ENCODE measurements at regions of chrX and their contacts with region 1.

Region 1: DNA sequence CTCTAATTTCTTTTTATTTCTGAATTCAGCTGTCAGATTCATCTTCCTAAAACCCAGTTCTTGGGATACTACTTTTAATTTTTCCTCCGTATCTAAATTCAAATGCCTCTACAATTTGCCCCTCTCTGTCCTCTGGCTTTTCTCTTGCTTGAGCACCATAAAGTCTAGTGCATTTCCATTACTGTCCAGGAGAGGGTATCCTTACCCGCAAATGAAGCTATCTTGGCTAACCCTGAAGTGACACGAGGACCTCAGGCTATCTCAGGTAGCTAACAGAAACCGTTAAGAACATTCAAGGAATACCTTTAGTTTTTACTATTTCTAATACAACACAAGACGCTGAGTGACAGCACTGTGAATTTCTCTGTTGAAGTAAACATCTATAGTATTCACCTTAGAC is 49.3 kb upstream of the PRR32 start:
- DNase-seq: no peak
- ATAC-seq: peak; percentile 79
- H3K4me3 ChIP-seq: no peak overlapping the region
- H3K27ac ChIP-seq: no peak overlapping the region
- H3K4me1 ChIP-seq: no peaks in the 10 kb centered on the region
- H3K27me3 ChIP-seq: no peaks in the 10 kb centered on the region
- CTCF ChIP-seq: peak; percentile 42 to 54 (median 53); a peak in 5 of 6 replicates
- EP300 ChIP-seq: no peak
- POLR2A ChIP-seq: no peak
- RAD21 ChIP-seq: peak; percentile 77

Region 2: GRCh38 chrX:127038065-127038464 is 267.9 kb after region 1 on chrX:
- CTCF ChIA-PET with region 1: interaction called, 12 read pairs
- POLR2A ChIA-PET with region 1: no interaction called
- RAD21 ChIA-PET with region 1: no interaction called
- SMC1A ChIA-PET with region 1: interaction called, 6 read pairs
- in situ Hi-C with region 1: no loop called
- intact Hi-C with region 1: loop called (anchors 5 kb)
- DNase-seq: no peak
- ATAC-seq: no peak
- H3K4me3 ChIP-seq: no peak overlapping the region
- H3K27ac ChIP-seq: no peak overlapping the region
- H3K4me1 ChIP-seq: no peaks in the 10 kb centered on the region
- H3K27me3 ChIP-seq: no peaks in the 10 kb centered on the region
- CTCF ChIP-seq: peak in 2 of 3 experiments; percentile 16 to 30; a peak in 2 of 6 replicates
- EP300 ChIP-seq: no peak
- POLR2A ChIP-seq: no peak
- RAD21 ChIP-seq: peak; percentile 39

Measured in GM12878 (cell line).